ENCODE measurements at regions of chr3 and their contacts with region 1.

Region 1: GRCh38 chr3:184795522-184796190 is 16.3 kb upstream of the VPS8 start:
- DNase-seq: no peak
- H3K4me3 Mint-ChIP-seq: no peak overlapping the region
- H3K27ac Mint-ChIP-seq: no peak overlapping the region
- H3K4me1 Mint-ChIP-seq: no peaks in the 10 kb centered on the region
- H3K27me3 Mint-ChIP-seq: peaks cover 38% of the 10 kb centered on the region

Region 2: DNA sequence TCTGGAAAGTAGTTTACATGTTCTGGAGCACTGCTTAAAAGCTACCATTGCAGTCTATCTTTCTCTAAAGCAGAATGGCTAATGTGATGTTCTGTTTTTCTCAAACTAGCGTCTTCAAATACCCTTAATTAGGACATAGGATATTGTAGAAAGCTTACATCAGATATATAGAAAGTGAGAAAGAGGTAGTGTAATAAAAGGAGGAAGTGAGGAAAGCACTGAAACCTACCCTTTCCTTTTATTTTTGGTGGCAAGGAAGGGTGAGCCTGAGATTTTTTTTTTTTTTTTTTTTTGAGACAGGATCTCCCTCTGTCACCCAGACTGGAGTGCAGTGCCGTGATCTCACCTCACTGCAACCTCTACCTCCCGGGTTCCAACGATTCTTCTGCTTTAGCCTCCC is 799.9 kb after region 1 on chr3:
- intact Hi-C with region 1: loop called (anchors 5 kb)
- DNase-seq: no peak
- H3K4me3 Mint-ChIP-seq: no peak overlapping the region
- H3K27ac Mint-ChIP-seq: no peak overlapping the region
- H3K4me1 Mint-ChIP-seq: peaks cover 4% of the 10 kb centered on the region
- H3K27me3 Mint-ChIP-seq: no peaks in the 10 kb centered on the region

Measured in activated CD4-positive, alpha-beta T cell treated with anti-CD3 and anti-CD28 coated beads, Interleukin-2, amount 10 ng/mL, durations not matched to agents 24 days and 14 days (primary cell).